ENCODE measurements at regions of chr13 and their contacts with region 1.

Region 1: GRCh38 chr13:108961542-108962125 is 332.2 kb downstream of the MYO16 start:
- DNase-seq: no peak
- ATAC-seq: peak; percentile 41 to 85 (median 82)
- H3K4me3 ChIP-seq: no peak overlapping the region
- H3K27ac ChIP-seq: peak overlapping the region in 1 of 12 donors; percentile 5
- H3K4me1 ChIP-seq: peaks cover 0 to 6% (median 0%) of the 10 kb centered on the region in 12 donors
- H3K27me3 ChIP-seq: no peaks in the 10 kb centered on the region
- CTCF ChIP-seq: peak; percentile 81 to 92 (median 86)
- POLR2A ChIP-seq: no peak

Region 2: DNA sequence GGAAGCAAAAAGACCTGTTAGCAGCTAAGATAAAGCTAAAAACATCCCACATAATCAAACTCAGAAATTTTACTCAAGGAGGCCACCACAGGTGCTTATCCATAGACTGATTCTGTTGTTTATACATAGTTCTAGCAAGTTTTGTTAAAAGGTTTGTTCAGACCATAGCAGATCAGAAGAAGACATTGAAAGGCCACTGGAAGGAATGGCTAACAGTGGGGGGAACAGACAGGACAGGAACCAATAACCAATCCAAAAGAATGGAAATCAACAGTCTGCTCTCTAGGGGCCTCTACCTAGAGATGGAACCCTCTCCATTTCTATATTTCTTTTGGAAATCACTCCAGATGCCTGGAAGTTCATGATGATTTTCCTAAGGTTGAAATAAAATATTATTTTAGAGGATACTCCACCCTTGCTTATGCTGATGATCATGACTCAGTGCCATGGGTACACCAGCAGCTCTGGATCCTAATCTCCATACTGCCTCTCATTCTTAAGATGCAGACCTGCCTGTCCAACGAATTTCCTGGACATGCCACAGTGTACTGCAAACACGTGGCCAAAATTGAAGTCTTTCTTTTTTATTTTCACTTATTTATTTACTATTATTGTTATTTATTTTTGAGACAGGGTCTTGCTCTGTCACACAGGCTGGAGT is 72.2 kb before region 1 on chr13:
- intact Hi-C with region 1: no loop called
- DNase-seq: no peak
- ATAC-seq: no peak
- H3K4me3 ChIP-seq: no peak overlapping the region
- H3K27ac ChIP-seq: no peak overlapping the region
- H3K4me1 ChIP-seq: no peaks in the 10 kb centered on the region
- H3K27me3 ChIP-seq: no peaks in the 10 kb centered on the region
- CTCF ChIP-seq: no peak
- POLR2A ChIP-seq: no peak

Region 3: GRCh38 chr13:110116072-110116487 is 1154.4 kb after region 1 on chr13:
- intact Hi-C with region 1: loop called in 1 of 10 experiments (anchors 5 kb)
- DNase-seq: peak in 4 of 5 donors; percentile 57 to 82 (median 61)
- ATAC-seq: peak in 3 of 4 donors; percentile 38 to 53 (median 44)
- H3K4me3 ChIP-seq: no peak overlapping the region
- H3K27ac ChIP-seq: no peak overlapping the region
- H3K4me1 ChIP-seq: peaks cover 0 to 13% (median 2%) of the 10 kb centered on the region in 12 donors
- H3K27me3 ChIP-seq: peaks cover 0 to 3% (median 0%) of the 10 kb centered on the region in 9 donors
- CTCF ChIP-seq: peak; percentile 41 to 73 (median 64)
- POLR2A ChIP-seq: no peak

Region 4: DNA sequence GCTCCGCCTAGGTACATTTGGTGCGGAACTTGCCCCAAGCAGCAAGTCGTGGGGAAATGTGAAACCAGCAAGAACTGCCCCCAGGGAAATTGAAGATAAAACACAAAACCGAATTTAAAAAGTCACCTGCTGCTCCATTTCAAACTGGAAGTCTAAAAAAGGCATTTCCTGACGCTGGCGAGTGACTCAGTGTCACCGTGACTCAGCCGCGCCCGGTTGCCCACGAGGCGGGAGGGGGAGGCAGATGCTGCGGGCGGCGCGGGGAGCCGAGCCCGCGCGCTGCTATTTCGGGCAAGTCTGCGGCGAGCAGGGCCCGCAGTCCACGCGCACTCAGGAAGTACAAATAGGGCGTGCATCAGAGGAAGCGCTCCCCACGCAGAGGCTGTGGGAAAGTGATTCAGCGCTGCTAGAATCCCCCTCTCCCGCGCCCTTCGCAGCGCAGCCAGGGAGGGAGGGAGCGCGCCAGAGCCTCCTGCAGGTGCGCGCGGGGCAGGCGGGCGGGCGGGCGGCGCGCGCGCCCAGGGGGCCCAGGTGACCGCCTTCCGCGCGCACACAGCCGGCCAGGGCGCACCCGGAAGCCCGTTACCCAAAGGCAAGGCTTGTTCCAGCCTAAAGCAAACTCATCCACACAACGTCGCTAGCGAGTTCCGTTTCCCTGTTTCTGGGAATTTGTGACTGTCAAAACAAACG is 1176.5 kb after region 1 on chr13:
- intact Hi-C with region 1: loop called in 1 of 10 experiments (anchors 5 kb)
- DNase-seq: peak; percentile 58 to 83 (median 78)
- ATAC-seq: peak in 3 of 4 donors; percentile 51 to 66 (median 64)
- H3K4me3 ChIP-seq: peak overlapping the region; percentile 37 to 81 (median 60)
- H3K27ac ChIP-seq: peak overlapping the region; percentile 36 to 97 (median 83)
- H3K4me1 ChIP-seq: peaks cover 0 to 41% (median 20%) of the 10 kb centered on the region in 12 donors
- H3K27me3 ChIP-seq: no peaks in the 10 kb centered on the region
- CTCF ChIP-seq: peak in 2 of 12 donors; percentile 6 to 34
- POLR2A ChIP-seq: peak in 1 of 2 donors; percentile 24